HEK293T (cell line): ENCODE measurements at regions of chr12 and their contacts with region 1.

Region 1: DNA sequence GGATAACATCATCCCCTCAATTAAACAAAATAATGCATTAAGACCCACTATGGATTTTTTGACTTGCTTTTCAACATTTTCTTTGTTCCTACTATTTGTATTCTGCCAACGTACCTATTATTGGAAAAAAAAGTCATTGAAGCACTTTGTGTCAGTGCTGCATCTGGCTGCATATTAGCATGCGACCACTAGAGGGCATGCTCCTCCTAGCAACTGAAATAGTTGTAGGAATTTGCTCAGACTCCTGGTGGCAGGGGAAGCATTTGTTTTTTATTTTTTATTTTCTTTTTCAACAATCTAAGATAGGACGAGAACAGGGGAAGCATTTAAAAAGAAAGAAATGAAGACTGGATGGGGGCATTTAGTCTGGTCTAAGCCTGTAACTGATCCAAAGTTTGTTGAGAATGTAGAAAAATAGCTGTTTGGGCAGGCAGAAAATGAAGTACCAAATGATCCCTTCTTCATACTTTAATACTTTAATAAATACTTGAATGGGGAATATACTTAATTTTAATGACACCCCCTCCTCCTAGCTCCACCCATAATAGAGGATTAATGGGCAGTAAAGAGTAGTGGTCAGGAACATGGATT is 14.5 kb upstream of the CLEC4A start:
- DNase-seq: peak; percentile 66

Region 2: DNA sequence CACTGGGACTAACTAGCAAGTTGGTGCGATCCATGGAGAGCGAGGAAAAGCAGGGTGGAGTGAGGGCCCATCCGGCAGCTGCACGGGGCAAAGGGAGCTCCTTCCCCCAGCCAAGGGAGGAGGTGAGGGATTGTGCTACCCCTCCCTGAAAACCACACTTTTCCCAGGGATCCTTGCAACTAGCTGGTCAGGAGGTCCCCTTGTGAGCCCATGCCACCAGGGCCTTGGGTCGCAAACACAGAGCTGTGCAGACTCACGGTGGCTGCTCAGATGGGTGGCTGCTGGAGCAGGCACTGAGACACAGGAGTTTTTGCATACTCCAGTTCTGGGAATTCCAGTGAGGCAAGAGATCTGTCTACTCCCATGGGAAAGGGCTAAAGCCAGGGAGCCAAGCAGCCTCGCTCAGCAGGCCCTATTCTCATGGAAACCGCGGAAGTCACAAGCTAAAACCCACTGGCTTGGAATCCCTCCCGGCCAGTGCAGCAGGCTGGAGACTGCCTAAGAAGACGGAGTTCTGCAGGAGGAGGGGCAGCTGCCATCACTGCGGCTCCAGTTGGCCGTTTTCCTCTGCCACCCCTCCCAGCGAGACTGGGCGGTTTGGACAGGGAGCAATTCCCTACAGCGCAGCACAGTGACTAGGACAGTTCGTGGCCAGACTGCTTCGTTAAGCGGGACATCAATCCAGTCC is 37.0 kb after region 1 on chr12:
- CTCF ChIA-PET with region 1: no interaction called
- POLR2A ChIA-PET with region 1: no interaction called
- DNase-seq: no peak

Region 3: DNA sequence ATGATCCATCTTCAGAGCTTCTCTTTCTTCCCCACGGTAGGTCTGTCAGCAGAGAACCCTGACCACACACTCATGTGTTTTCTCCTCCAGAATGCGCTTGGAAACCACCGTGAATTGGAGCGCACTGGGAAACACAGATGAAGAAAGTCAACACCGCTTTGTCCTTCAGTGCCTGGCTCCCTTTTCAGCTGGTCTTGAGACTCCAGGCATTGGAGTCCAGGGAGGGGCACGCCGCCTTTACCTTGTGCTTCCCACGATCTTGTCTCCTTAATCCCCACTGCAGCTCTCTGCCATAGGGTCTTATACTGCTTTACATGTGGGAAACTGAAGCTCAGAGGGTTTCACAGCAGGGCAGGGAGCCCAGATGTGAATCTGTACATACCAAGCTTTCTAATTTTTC is 117.5 kb after region 1 on chr12:
- CTCF ChIA-PET with region 1: interaction called, 11 read pairs
- POLR2A ChIA-PET with region 1: no interaction called
- DNase-seq: no peak